ENCODE measurements at regions of chr20 and their contacts with region 1.

Region 1: DNA sequence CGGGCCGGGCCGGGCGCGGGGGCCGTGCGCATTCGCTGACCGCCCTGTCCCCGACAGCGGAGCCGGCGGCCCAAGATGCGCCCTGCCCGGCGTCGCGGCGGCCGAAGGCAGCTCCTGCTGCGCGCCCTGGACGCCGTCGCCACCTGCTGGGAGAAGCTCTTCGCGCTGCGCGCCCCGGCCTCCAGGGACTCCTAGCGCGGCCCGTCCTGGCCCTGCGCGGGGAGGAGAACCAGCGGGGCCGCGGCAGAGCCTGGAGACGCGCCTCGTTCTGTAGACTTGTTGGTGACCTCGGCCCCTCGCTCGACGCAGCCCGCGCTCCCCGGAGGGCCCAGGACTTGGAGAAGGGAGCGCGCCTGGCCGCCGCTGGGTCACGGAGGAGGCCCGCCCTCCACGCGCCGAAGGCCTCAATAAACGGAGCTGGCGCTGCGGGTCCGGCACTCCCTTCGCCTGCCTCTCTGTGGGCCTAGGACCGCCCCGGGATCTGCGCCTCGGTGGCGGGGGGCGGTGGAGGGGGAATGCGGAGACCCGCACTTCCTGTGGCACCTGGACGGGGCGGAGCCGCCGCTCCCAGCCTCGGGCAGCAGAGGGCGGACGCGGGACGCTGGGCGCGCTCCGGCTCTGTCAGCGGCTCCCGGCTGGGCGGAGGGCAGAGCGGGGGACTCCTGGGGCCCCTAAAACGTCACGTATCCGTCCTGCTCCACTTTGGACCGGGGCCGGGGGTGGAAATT is 2.7 kb downstream of the C20orf204 start:
- DNase-seq: peak; percentile 88
- H3K27ac ChIP-seq: peak overlapping the region; percentile 58
- CTCF ChIP-seq: peak; percentile 97

Region 2: GRCh38 chr20:63934271-63935068 is 104.3 kb before region 1 on chr20:
- CTCF ChIA-PET with region 1: no interaction called
- POLR2A ChIA-PET with region 1: no interaction called
- DNase-seq: no peak
- H3K27ac ChIP-seq: peak overlapping the region; percentile 91
- CTCF ChIP-seq: no peak; the same call in 1 of the 2 replicates

Region 3: GRCh38 chr20:63980806-63981728 is 57.7 kb before region 1 on chr20 and contains the start of gene PRPF6:
- CTCF ChIA-PET with region 1: interaction called, 13 read pairs
- POLR2A ChIA-PET with region 1: no interaction called
- DNase-seq: peak; percentile 98
- H3K27ac ChIP-seq: peak within 1 kb of the TSS; percentile 95
- CTCF ChIP-seq: peak; percentile 99

Region 4: GRCh38 chr20:64024141-64024990 is 14.4 kb before region 1 on chr20:
- CTCF ChIA-PET with region 1: interaction called, 55 read pairs
- POLR2A ChIA-PET with region 1: interaction called, 3 read pairs
- DNase-seq: no peak
- H3K27ac ChIP-seq: no peak overlapping the region
- CTCF ChIP-seq: no peak

Region 5: DNA sequence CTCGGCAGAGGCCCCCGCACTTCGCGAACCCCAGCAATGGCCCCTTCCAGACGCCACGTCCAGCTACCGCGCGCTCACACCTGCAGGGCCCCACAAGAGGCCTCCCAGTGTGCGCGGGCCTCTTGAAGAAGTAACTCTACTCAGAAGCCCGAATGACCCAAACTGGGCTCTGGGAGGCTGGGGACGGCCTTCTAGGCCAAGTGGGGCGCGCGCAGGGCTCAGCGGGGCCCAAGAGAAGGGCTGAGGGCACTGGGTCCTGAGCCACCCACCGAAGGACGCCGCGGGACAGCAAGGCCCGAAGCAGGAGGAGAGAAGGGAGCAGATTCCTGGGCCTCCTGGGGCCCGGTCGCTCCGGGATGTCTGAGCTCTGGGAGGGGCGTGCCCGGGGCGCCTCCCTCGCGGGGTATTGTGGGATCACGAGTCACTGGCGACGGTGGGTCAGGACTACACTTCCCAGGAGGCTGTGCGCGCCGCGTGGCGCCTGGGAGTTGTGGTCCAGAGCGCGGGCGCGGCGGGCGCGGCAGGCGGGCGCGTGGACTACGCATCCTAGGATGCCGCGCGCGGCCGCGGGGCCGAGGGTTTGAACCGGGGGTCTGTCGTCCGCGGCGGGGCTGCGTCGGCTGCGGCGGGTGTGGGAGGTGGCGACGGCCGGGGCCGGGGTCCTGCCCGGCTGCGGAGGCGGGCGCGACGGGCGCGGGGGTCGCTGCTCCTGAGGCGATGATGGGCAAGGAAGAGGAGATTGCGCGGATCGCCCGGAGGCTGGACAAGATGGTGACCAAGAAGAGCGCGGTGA is 24.1 kb after region 1 on chr20 and contains the start of gene TCEA2:
- CTCF ChIA-PET with region 1: interaction called, 98 read pairs
- POLR2A ChIA-PET with region 1: interaction called, 6 read pairs
- DNase-seq: peak; percentile 99
- H3K27ac ChIP-seq: peak within 1 kb of the TSS; percentile 83
- CTCF ChIP-seq: no peak

Region 6: GRCh38 chr20:64079273-64080012 is 40.7 kb after region 1 on chr20 and contains the start of gene RGS19:
- CTCF ChIA-PET with region 1: interaction called, 18 read pairs
- POLR2A ChIA-PET with region 1: no interaction called
- DNase-seq: no peak
- H3K27ac ChIP-seq: peak within 1 kb of the TSS; percentile 77
- CTCF ChIP-seq: no peak

Region 7: DNA sequence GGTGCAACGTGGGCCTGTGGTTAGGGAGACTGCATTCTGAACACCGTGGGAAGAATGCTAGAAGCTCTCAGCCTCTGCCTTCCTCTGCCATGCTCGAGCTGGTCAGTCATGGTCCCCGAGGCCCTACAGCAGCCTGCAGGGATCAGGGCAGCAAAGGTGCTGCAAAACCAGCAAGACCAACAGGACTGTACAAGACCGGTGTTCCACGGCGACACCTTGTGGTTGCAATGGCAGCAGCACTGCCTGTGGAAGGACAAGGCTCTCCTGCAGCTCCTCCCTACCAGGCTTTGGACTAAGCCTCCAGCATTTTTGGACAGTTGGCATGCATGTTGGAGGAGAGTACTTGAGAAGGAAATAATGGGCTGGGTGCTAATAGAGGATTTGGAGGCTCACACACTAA is 106.7 kb after region 1 on chr20:
- CTCF ChIA-PET with region 1: no interaction called
- POLR2A ChIA-PET with region 1: no interaction called
- DNase-seq: no peak
- H3K27ac ChIP-seq: no peak overlapping the region
- CTCF ChIP-seq: no peak